ENCODE measurements at regions of chr10 and their contacts with region 1.

Region 1: DNA sequence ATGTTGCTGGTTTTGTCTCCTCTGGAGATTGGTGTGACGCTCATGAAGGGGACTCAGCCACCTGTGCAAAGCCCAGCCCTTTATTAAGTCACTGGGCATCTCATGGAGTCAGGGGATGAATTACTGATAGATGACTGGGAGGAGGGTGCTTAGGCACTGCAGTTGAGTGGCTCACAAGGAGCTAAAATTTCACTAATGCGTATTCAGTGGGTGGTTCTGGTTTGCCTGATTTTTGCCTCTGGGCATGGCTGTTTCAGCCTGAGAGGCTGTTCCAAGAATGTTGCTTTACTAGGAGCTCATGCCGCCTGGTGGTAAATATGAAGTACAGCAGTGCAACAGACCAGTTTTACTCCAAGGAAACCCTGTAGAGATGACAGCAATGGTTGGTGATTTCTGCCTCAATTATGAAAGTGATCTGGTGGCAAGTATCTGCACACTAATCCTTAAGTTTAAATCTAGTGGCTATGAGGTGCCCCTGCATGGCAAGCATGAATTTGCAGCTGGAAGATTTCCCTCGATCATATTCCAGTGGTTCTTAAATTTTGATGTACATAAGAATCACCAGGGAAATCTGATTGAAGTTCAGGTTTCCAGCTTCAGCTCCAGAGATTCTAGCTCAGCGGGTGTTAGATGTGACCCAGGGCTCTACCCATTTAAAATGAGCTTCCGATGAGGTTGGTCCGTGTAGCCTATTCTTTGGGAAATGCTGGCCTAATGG is 19.9 kb downstream of the ACTA2 start:
- DNase-seq: peak; percentile 58
- H3K4me3 Mint-ChIP-seq: no peak overlapping the region
- H3K27ac Mint-ChIP-seq: no peak overlapping the region
- H3K4me1 Mint-ChIP-seq: peaks cover 18% of the 10 kb centered on the region
- H3K27me3 Mint-ChIP-seq: no peaks in the 10 kb centered on the region

Region 2: DNA sequence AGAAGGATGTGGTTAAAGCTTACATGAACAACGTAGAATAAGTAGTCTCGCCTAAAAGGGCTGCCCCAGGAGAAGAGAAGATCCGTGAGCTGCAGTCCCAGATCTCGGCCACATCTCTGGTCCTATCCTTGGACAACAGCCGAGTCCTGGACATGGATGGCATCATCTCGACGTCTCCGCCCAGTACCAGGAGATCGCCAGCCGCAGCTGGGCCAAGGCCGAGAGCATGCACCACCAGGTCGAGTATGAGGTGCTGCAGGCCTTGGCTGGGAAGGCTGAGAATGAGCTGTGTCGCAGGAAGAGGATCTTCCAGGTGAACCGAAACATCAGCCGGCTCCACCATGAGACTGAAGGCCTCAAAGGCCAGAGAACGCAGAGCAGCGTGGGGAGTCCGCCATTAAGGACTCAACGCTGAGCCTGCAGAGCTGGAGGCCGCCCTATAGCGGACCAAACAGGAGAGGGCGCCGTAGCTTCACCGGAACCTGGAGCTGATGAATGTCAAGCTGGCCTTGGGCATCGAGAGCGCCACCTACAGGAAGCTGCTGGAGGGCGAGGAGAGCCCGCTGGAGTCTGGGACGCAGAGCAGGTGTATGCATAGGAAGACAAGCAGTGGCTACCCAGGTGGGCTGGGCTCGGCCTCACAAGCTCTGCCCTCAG is 204.5 kb before region 1 on chr10:
- CTCF ChIA-PET with region 1: interaction called, 7 read pairs
- intact Hi-C with region 1: loop called (anchors 1 kb)
- DNase-seq: peak; percentile 68
- H3K4me3 Mint-ChIP-seq: no peak overlapping the region
- H3K27ac Mint-ChIP-seq: no peak overlapping the region
- H3K4me1 Mint-ChIP-seq: peaks cover 2% of the 10 kb centered on the region
- H3K27me3 Mint-ChIP-seq: peaks cover 7% of the 10 kb centered on the region

Region 3: GRCh38 chr10:88901206-88901983 is 31.3 kb before region 1 on chr10:
- CTCF ChIA-PET with region 1: interaction called, 36 read pairs
- intact Hi-C with region 1: no loop called
- DNase-seq: no peak
- H3K4me3 Mint-ChIP-seq: peak overlapping the region; percentile 2
- H3K27ac Mint-ChIP-seq: peak overlapping the region; percentile 82
- H3K4me1 Mint-ChIP-seq: peaks cover 59% of the 10 kb centered on the region
- H3K27me3 Mint-ChIP-seq: no peaks in the 10 kb centered on the region

Region 4: DNA sequence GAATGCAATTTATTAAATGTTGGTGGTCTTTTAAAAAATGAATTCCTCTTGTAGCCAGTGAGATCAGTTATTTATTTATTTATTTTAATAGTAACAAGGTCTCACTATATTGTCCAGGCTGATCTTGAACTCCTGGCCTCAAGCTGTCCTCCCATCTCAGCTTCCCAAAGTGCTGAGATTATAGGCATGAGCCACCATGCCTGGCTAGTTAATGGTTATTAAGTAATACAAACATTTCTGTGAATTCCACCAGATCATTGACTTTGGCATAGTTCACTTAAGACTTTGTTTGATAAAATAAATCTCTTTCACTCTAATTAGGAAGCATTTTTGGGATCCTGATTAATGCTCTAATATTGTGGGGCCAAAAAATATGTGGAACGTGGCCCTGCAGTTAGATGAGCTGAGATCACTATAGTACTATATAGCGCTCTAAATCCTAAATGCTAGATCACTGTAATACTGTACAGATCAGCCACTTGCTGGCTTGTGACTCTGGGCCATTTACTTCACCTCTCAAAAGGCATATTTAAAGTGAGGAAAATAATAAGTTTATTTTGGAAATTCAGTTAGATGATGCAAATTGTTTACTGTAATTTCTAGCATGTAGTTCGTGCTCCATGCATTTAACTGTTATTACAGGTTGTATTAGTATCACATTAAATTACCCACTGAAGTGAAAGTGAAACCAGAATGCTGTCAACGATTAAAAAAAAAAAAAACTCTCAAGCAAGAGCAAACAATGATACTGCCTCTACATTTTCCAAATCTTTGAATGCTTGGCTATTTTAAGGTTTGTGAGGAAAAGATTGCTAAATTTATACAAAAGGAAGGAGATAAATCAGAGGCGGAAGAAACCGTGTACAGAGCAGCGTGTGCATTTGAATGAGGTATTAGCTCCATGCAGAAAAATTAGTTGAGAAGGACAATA is 42.0 kb after region 1 on chr10:
- CTCF ChIA-PET with region 1: interaction called, 6 read pairs
- intact Hi-C with region 1: loop called (anchors 1 kb)
- DNase-seq: no peak
- H3K4me3 Mint-ChIP-seq: peak overlapping the region; percentile 87
- H3K27ac Mint-ChIP-seq: peak overlapping the region; percentile 87
- H3K4me1 Mint-ChIP-seq: peaks cover 10% of the 10 kb centered on the region
- H3K27me3 Mint-ChIP-seq: no peaks in the 10 kb centered on the region

Region 5: DNA sequence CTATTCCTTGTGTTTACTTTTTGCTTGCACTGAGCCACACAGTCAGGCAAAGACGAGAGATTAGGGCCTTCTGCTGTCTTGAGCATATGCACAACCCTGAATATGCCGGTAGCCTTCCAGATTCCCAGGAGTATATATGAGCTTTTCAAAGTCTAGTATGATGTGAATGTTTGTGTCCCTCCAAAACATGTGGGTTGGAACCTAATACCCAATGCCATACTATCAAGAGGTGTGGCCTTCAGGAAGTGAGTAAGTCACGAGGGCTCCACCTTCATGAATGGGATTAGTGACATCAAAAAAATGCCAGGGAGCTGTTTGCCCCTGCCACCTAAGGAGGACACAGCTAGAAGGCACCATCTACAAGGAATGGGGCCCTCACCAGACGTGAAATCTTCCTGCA is 169.2 kb after region 1 on chr10:
- CTCF ChIA-PET with region 1: no interaction called
- intact Hi-C with region 1: no loop called
- DNase-seq: no peak
- H3K4me3 Mint-ChIP-seq: no peak overlapping the region
- H3K27ac Mint-ChIP-seq: no peak overlapping the region
- H3K4me1 Mint-ChIP-seq: no peaks in the 10 kb centered on the region
- H3K27me3 Mint-ChIP-seq: no peaks in the 10 kb centered on the region

Region 6: GRCh38 chr10:89115876-89116627 is 183.4 kb after region 1 on chr10:
- CTCF ChIA-PET with region 1: interaction called, 3 read pairs
- intact Hi-C with region 1: loop called (anchors 1 kb)
- DNase-seq: no peak
- H3K4me3 Mint-ChIP-seq: no peak overlapping the region
- H3K27ac Mint-ChIP-seq: no peak overlapping the region
- H3K4me1 Mint-ChIP-seq: no peaks in the 10 kb centered on the region
- H3K27me3 Mint-ChIP-seq: peaks cover 11% of the 10 kb centered on the region

Region 7: DNA sequence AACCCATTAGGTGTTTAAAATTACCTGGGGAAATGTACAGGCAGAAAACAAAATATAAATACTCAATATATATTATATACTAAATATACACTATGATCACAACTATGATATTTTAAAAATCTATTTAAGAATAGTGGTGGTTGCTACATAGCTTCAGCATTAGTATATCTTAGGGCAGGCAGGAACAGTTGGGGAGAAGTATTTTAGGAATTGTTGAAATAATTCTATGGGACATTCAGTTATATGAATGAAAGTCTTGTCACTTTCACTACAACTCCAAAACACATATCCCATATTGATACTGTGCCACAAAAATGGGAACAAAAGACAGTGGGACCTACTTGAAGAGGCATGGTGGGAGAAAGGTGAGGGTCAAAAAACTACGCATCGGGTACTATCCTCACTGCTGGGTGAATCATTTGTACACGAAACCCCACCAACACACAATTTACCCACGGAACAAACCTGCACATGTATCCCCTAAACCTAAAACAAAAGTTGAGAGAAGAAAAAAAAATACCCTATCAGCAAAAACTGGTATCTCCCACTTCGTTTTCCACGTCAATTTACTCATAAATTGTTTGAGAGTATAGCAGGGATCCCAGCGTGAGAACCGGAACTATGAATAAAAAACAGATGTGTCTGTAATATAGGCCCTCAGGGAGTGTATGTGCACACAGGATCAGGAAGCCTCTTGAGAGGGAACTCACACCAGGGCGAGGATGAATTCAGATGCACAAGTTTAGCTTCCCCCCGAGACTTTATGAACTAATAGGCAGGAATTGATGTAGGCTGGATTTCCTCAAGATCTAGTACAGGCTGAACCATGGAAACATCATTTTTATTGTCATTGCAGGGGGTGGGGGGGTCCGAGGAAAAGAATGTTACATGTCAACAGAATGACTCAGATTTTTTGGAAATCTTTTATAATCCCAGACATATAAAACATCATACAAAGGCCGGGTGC is 586.5 kb after region 1 on chr10:
- CTCF ChIA-PET with region 1: no interaction called
- intact Hi-C with region 1: no loop called
- DNase-seq: no peak
- H3K4me3 Mint-ChIP-seq: no peak overlapping the region
- H3K27ac Mint-ChIP-seq: no peak overlapping the region
- H3K4me1 Mint-ChIP-seq: no peaks in the 10 kb centered on the region
- H3K27me3 Mint-ChIP-seq: peaks cover under 1% of the 10 kb centered on the region

Region 8: GRCh38 chr10:89563861-89564478 is 631.3 kb after region 1 on chr10:
- CTCF ChIA-PET with region 1: no interaction called
- intact Hi-C with region 1: loop called (anchors 5 kb)
- DNase-seq: peak; percentile 27
- H3K4me3 Mint-ChIP-seq: no peak overlapping the region
- H3K27ac Mint-ChIP-seq: no peak overlapping the region
- H3K4me1 Mint-ChIP-seq: no peaks in the 10 kb centered on the region
- H3K27me3 Mint-ChIP-seq: peaks cover 8% of the 10 kb centered on the region

Measured in activated naive CD4-positive, alpha-beta T cell treated with anti-CD3 and anti-CD28 coated beads for 36 hours (primary cell).